ENCODE measurements at regions of chr2 and their contacts with region 1.

Region 1: DNA sequence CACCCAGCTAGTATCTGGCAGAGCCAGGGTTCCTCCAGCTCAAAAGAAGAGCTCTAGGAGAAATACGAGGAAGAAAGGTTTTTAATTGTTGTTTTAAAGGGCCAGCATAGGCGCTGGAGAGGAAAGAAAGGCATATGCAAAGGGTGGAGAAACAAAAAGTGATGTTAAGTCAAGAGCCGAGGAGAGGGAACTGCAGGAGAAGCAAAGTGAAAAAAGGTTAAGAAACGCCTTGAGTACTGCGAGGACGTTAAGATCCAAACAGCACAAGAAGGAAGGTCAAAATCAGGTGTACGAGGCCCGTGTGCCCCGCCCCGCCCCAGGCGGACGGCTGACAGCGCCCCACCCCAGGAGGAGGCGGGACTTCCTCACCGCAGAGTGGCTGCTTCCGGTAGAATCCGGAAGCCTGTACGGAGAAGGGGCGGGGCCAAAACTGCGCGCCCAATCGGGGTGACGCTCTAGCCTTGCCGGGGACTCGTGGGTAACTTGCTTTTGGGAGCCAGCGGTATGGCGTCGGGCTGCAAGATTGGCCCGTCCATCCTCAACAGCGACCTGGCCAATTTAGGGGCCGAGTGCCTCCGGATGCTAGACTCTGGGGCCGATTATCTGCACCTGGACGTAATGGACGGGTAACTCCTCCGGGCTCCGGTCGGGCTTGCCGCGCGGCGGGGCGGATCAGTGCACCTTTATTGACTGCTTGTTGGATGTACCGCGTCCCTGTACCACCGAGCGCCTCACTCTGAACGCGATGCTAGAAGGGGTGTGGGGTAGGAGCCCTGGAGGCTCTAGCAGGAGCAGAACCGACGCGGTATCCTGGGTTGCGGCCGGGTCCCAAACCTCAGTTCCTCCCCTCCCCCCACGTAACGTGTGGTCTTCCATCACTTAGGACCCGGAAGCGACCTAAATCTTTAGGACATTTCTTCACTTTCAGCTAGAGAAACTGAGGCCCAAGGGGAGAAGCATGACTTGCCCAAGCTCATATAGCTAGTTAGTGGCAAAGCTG is at the start of gene RPE:
- DNase-seq: peak; percentile 99
- H3K4me3 Mint-ChIP-seq: peak within 1 kb of the TSS; percentile 99
- H3K27ac Mint-ChIP-seq: peak within 1 kb of the TSS; percentile 91
- H3K4me1 Mint-ChIP-seq: peaks cover 42% of the 10 kb centered on the region
- H3K27me3 Mint-ChIP-seq: no peaks in the 10 kb centered on the region
- total RNA-seq, gene RPE: 61.4 and 64.1 TPM in 2 replicates

Region 2: GRCh38 chr2:209840434-209840833 is 162.0 kb before region 1 on chr2:
- intact Hi-C with region 1: no loop called
- DNase-seq: no peak
- H3K4me3 Mint-ChIP-seq: no peak overlapping the region
- H3K27ac Mint-ChIP-seq: no peak overlapping the region
- H3K4me1 Mint-ChIP-seq: no peaks in the 10 kb centered on the region
- H3K27me3 Mint-ChIP-seq: no peaks in the 10 kb centered on the region

Region 3: GRCh38 chr2:210476194-210477128 is 474.0 kb after region 1 on chr2 and contains the start of gene LANCL1:
- intact Hi-C with region 1: loop called (anchors 5 kb)
- DNase-seq: peak; percentile 95
- H3K4me3 Mint-ChIP-seq: peak within 1 kb of the TSS; percentile 99
- H3K27ac Mint-ChIP-seq: peak within 1 kb of the TSS; percentile 98
- H3K4me1 Mint-ChIP-seq: peaks cover 28% of the 10 kb centered on the region
- H3K27me3 Mint-ChIP-seq: no peaks in the 10 kb centered on the region
- total RNA-seq, gene LANCL1: 32.3 and 34.2 TPM in 2 replicates

Measured in activated CD4-positive, alpha-beta T cell treated with anti-CD3 and anti-CD28 coated beads, Interleukin-2, amount 10 ng/mL, durations not matched to agents 24 days and 14 days (primary cell).